ENCODE measurements at regions of chr1 and their contacts with region 1.

Region 1: GRCh38 chr1:92994105-92994712 is 32.9 kb upstream of the DIPK1A start:
- DNase-seq: peak; percentile 82
- H3K4me3 Mint-ChIP-seq: no peak overlapping the region
- H3K27ac Mint-ChIP-seq: no peak overlapping the region
- H3K4me1 Mint-ChIP-seq: peaks cover 41% of the 10 kb centered on the region
- H3K27me3 Mint-ChIP-seq: no peaks in the 10 kb centered on the region

Region 2: DNA sequence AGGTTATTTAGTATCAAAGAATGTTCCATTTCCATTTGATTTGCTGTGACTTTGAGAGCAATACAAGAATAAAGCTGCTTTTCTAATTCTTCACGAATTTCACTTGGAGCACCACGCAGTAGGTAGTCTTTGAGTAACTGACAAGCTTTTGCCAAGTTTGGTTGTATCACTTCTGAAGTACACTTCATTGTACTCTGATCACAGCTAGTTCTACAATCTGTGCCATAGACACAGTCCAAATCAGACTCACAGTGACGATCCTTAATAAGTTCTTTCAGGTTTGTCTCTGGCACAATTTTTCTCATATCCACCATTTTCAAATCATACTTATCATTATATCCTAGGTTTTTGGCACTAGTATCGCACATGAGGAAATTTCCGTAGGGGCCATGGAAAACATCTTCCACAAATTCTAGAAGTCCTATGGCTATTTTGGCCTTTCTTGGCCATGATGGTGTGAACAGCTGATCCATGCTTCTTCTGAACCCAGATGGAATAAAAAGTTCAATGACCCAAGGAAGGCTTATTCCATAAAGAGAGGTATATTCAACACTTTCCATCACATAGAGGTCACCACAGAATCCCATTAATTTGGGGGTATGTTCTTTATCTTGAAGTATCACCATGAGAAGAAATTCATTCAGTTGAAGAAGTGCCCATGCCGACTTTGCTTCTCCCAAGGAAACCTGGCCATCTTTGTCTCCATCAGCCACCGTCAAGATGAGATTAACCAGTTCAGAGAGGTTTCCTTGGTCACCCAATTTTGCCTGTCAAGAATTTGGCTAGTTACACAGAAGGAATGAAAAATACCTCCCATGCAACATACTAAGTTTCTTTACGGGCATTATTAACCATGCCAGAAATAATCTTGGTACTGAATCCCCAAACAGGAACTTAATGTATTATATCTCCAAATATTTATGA is 150.5 kb before region 1 on chr1:
- CTCF ChIA-PET with region 1: interaction called, 16 read pairs
- intact Hi-C with region 1: no loop called
- DNase-seq: no peak
- H3K4me3 Mint-ChIP-seq: no peak overlapping the region
- H3K27ac Mint-ChIP-seq: no peak overlapping the region
- H3K4me1 Mint-ChIP-seq: peaks cover 16% of the 10 kb centered on the region
- H3K27me3 Mint-ChIP-seq: no peaks in the 10 kb centered on the region

Region 3: DNA sequence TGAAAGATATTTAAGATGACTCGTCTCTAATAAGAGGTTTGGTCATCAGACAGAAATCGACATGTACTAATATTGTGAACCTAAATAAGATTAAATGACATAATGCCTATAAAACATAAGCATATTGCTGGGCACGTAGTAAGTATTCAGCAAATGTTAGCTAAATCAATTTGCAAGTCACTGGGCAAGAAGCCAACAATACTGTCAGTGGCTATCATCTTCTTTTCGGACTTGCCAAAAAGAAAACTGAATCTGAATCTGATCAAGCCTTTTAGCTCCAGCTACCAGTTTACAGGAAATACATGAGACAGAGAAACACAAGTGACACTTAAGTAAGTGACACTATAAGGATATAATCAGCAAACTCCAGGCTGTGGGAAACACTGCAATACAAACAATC is 116.4 kb before region 1 on chr1:
- CTCF ChIA-PET with region 1: interaction called, 10 read pairs
- intact Hi-C with region 1: no loop called
- DNase-seq: peak; percentile 14
- H3K4me3 Mint-ChIP-seq: peak overlapping the region; percentile 58
- H3K27ac Mint-ChIP-seq: peak overlapping the region; percentile 72
- H3K4me1 Mint-ChIP-seq: peaks cover 27% of the 10 kb centered on the region
- H3K27me3 Mint-ChIP-seq: no peaks in the 10 kb centered on the region

Region 4: DNA sequence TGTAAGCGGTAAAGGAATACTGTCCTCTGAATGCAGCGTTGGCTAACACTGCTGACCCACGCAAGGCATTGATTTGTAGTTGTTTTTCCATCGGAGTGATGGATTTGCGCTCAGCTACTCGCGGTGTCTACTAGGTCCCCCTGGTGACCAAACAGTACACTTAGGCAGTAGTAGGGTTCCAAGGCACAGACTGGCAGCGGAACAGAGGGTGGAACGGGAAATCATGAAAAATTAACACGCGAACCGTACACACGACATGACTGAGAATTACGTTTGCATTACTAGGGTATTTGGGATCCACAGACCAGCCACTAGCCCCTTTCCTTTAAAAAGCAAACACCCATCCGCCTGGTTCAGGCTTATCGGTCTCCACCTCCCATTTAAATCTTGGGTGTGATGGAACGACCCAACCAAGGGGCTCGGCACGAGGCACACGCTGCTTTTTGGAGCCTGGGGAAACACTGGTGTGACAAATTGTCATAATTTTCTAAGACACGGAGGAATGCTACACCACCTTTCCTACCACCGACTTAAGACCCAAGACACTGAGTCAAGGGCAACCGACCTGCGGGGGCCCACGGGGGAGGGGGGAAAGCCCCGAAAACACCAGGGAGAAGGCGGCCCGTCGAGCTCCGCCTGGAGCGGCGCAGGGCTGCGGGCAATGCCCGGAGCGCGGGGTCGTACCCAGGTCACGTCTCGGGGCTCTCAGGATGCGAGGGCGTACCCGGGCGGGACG is 33.6 kb before region 1 on chr1:
- CTCF ChIA-PET with region 1: interaction called, 115 read pairs
- intact Hi-C with region 1: loop called (anchors 2 kb)
- DNase-seq: peak; percentile 76
- H3K4me3 Mint-ChIP-seq: peak overlapping the region; percentile 89
- H3K27ac Mint-ChIP-seq: peak overlapping the region; percentile 94
- H3K4me1 Mint-ChIP-seq: peaks cover 41% of the 10 kb centered on the region
- H3K27me3 Mint-ChIP-seq: no peaks in the 10 kb centered on the region

Region 5: DNA sequence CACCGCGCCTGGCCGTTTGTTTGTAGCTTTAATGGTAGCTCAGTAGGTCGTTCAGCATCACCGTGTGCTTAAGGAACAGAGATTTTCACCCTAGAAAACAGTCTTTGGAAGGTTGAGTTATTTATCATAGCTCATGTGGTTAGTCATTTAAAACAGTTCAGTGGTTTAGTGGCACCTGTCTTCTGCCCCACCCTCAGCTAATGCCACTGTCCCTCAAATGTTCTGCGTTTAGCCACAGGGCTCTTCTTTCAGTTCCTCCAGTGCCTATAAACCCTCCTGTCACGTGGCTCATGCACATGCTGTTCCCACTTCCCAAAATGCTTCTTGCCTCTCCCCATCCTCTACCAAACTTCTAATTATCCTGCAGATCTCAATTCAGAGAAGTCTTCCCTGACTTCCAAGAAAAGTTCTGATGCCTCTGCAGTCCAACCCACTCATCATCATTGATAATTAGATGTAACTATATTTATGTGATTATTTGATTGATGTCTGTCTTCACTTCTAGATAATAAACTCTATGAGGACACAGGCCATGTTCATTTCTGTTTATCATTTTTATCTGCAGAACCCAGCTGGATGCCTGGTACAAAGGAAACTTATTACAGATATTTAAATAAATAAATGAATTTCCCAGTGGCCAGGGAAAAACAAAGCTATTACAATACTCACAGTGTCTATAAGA is 18.5 kb before region 1 on chr1:
- CTCF ChIA-PET with region 1: interaction called, 227 read pairs
- intact Hi-C with region 1: no loop called
- DNase-seq: no peak
- H3K4me3 Mint-ChIP-seq: no peak overlapping the region
- H3K27ac Mint-ChIP-seq: peak overlapping the region; percentile 38
- H3K4me1 Mint-ChIP-seq: peaks cover 62% of the 10 kb centered on the region
- H3K27me3 Mint-ChIP-seq: no peaks in the 10 kb centered on the region